ENCODE measurements at regions of chr20 and their contacts with region 1.

Region 1: DNA sequence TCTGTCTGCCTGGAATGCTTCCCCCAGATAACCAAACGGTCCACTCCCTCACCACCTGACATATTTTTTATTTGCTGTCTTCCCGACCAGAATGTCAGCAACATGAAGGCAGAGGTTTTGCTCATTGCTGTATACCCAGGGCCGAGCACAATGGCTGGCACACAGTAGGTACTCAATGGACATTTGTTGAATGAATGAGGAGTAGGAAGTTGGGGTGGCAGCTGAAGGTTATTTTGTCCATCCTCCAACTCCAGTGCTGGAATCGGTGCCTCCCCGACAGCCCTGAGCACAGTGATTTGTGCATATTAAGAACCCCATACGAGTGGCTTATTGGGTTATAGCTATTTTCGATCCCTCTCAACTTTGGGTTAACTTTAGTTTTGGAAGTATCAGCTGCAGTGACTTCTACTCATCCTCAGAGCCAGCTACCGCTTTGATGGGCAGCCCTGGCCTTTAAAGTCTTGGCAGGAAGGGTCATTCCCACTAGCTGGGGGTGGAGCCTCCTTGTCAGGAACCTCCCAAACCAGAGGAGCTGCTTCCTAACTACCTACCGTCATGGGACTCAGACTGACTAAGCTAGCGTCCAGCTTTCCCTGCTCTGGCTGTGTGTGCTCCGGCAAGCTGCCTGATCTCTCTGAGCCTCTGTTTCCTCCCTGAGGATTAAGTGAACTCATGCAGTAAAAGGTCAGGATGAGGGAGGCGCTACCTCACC is 10.2 kb downstream of the DUSP15 start:
- DNase-seq: peak; percentile 29
- ATAC-seq: peak; percentile 67

Region 2: DNA sequence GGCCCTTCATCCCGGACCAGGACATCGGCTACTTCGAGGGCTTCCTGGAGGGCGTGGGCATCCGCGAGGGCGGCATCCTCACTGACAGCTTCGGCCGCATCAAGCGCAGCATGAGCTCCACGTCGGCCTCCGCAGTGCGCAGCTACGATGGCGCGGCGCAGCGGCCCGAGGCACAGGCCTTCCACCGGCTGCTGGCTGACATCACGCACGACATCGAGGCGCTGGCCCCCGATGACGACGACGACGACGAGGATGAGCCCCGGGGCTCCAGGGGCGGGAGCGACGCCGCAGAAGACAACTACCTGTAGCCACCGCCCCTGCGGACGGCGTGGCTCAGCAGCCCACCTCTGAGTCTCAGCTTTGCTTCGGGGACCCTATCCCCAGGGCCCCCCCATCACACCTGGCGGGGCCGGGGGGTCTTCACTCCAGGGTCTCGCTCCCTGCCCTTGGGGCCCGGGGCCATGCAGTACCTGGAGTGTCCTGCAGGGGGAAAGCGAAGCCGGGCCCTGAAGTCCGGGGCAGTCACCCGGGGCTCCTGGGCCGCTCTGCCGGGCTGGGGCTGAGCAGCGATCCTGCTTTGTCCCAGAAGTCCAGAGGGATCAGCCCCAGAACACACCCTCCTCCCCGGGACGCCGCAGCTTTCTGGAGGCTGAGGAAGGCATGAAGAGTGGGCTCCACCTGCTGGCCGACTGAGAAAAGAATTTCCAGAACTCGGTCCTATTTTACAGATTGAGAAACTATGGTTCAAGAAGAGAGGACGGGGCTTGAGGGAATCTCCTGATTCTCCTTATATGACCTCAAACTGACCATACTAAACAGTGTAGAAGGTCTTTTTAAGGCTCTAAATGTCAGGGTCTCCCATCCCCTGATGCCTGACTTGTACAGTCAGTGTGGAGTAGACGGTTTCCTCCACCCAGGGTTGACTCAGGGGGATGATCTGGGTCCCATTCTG is 171.1 kb after region 1 on chr20:
- intact Hi-C with region 1: loop called (anchors 10 kb)
- DNase-seq: peak; percentile 84
- ATAC-seq: peak; percentile 86

Measured in left ventricle myocardium superior (tissue), 1 donor.